Endothelial cell of umbilical vein (primary cell): ENCODE measurements at regions of chr1 and their contacts with region 1.

Region 1: DNA sequence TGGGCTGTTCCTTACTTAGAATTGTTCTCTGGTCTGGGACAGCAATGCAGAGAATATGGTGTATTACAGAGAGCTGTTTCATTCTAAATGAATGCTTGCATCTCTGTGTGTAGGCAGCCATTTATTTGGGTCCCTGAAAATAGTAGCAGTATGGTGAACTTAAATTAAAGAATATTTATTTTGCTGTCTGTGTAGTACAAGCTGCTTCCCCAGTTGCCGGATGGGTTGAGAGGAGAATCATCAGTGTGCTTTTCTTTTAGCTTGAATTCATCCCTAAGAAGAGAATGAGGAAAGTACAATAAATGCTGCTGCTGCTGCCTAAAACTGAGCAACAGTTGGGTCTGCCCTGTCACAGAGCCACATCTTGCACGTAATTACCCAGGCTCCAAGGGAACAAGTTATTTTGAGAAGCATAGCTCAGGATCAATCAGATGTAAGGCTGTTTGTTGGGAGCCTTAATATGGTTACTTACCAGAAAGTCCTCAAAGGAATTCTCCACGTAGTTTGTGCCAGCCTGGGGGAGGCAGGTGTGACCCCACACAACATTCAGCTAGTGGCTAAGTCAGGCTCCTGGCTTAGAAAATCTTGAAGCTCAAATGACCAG is 16.6 kb downstream of the ACTN2 start:
- DNase-seq: no peak
- H3K4me3 ChIP-seq: no peak overlapping the region
- H3K27ac ChIP-seq: no peak overlapping the region
- H3K4me1 ChIP-seq: no peaks in the 10 kb centered on the region
- H3K27me3 ChIP-seq: no peaks in the 10 kb centered on the region
- CTCF ChIP-seq: no peak
- POLR2A ChIP-seq: no peak

Region 2: GRCh38 chr1:236716160-236716559 is 13.3 kb after region 1 on chr1:
- CTCF ChIA-PET with region 1: interaction called, 10 read pairs
- POLR2A ChIA-PET with region 1: no interaction called
- dilution Hi-C with region 1: no loop called
- intact Hi-C with region 1: no loop called
- DNase-seq: peak; percentile 74
- H3K4me3 ChIP-seq: no peak overlapping the region
- H3K27ac ChIP-seq: no peak overlapping the region
- H3K4me1 ChIP-seq: no peaks in the 10 kb centered on the region
- H3K27me3 ChIP-seq: no peaks in the 10 kb centered on the region
- CTCF ChIP-seq: no peak
- POLR2A ChIP-seq: no peak